Activated CD4-positive, alpha-beta T cell treated with anti-CD3 and anti-CD28 coated beads for 36 hours (primary cell): ENCODE measurements at regions of chr18 and their contacts with region 1.

Region 1: DNA sequence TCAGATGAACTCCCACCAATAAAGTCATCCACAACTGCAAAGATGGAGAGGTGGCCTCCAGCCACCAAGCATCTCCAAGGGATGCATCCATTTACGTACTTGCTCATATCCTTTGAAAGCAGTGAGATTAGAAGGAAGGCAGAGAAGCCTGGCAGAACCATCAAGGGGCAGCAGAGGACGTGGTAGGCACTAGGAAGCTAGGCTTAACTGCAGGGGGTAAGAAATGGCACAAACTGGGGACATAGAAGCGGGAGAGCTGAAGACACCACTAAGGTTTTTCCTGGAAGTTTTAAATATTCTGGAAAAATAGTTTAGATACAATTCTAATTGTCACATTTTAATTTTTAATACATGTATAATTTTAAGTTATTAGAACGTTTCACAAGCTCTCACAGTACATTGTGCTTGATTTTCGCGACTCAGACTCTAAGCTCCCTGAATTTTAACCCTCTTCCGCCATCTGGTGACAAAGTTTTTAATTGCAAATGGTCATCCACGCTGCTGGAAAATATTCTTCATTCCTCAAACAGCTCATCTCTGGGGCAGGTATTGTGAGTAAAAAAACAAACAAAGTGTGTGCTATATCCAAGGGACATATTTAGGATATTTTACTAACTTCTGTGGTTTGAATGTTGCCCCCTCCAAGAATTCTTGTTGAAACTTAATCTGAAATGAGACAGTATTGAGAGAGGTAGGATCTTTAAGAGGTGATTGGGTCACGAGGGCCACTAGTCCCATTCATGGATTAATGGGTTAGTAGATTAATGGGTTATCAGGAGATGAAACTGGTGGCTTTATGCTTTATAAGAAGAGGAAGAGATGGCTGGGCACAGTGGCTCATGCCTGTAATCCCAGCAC is 1.6 kb upstream of the PSTPIP2 start:
- DNase-seq: peak; percentile 68
- ATAC-seq: peak; percentile 60
- H3K4me3 Mint-ChIP-seq: no peak overlapping the region
- H3K27ac Mint-ChIP-seq: no peak overlapping the region
- H3K4me1 Mint-ChIP-seq: peaks cover 36% of the 10 kb centered on the region
- H3K27me3 Mint-ChIP-seq: no peaks in the 10 kb centered on the region

Region 2: DNA sequence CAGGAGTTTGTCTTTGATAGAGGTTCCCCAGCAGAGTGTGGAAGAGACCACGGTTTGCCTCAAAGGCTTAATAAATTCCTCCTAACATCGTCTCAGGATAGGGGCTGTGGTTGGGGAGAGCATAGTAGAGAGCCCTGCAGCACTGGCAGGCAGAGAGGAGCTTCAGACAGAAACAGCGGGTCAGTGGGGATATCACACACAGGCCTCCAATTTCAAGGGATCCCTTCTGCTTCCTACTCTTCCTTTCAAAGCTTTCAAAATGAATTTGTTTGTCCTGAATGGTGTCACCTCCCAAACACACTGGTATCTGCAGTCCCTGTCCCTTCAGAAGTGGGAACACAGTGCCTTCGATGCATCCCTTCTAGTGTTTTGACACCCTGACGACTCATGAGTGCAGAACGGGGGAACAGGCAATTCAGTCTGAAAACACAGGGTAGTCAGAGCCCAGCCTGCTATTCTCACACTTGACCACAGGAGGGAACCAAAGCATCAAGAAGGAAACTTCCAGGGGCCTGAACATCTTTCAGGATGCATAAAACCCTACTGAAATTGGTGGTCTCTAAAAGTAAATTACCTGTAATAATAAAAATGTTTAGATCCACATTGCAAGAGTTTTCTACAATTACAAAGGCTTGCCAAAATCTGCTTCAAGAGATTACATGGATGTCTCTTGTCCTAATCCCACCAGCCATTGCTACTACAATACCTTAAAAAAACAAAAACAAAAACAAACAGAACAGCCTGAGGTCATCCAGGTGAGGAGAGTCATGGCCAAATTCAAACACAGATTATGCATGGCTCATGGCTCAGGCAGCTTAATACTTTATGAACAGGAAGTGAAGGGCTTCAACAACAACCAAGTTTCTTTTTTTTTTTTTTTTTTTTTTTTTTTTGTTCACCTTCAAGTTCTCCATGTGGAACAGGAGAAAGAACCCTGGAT is 408.6 kb before region 1 on chr18:
- CTCF ChIA-PET with region 1: interaction called, 42 read pairs
- POLR2A ChIA-PET with region 1: interaction called, 5 read pairs
- intact Hi-C with region 1: loop called (anchors 1 kb)
- DNase-seq: peak; percentile 76
- ATAC-seq: peak; percentile 60
- H3K4me3 Mint-ChIP-seq: no peak overlapping the region
- H3K27ac Mint-ChIP-seq: peak overlapping the region; percentile 53
- H3K4me1 Mint-ChIP-seq: peaks cover 52% of the 10 kb centered on the region
- H3K27me3 Mint-ChIP-seq: no peaks in the 10 kb centered on the region

Region 3: GRCh38 chr18:45874491-45875184 is 199.1 kb before region 1 on chr18:
- CTCF ChIA-PET with region 1: interaction called, 20 read pairs
- POLR2A ChIA-PET with region 1: no interaction called
- intact Hi-C with region 1: loop called in 1 of 2 experiments (anchors 2 kb)
- DNase-seq: peak; percentile 84
- ATAC-seq: peak; percentile 91
- H3K4me3 Mint-ChIP-seq: peak overlapping the region; percentile 41
- H3K27ac Mint-ChIP-seq: peak overlapping the region; percentile 96
- H3K4me1 Mint-ChIP-seq: peaks cover 34% of the 10 kb centered on the region
- H3K27me3 Mint-ChIP-seq: no peaks in the 10 kb centered on the region

Region 4: GRCh38 chr18:45916302-45916701 is 157.4 kb before region 1 on chr18:
- CTCF ChIA-PET with region 1: interaction called, 13 read pairs
- POLR2A ChIA-PET with region 1: interaction called, 3 read pairs
- intact Hi-C with region 1: loop called in 1 of 2 experiments (anchors 1 kb)
- DNase-seq: peak; percentile 34
- ATAC-seq: peak; percentile 55
- H3K4me3 Mint-ChIP-seq: no peak overlapping the region
- H3K27ac Mint-ChIP-seq: no peak overlapping the region
- H3K4me1 Mint-ChIP-seq: peaks cover 12% of the 10 kb centered on the region
- H3K27me3 Mint-ChIP-seq: no peaks in the 10 kb centered on the region

Region 5: DNA sequence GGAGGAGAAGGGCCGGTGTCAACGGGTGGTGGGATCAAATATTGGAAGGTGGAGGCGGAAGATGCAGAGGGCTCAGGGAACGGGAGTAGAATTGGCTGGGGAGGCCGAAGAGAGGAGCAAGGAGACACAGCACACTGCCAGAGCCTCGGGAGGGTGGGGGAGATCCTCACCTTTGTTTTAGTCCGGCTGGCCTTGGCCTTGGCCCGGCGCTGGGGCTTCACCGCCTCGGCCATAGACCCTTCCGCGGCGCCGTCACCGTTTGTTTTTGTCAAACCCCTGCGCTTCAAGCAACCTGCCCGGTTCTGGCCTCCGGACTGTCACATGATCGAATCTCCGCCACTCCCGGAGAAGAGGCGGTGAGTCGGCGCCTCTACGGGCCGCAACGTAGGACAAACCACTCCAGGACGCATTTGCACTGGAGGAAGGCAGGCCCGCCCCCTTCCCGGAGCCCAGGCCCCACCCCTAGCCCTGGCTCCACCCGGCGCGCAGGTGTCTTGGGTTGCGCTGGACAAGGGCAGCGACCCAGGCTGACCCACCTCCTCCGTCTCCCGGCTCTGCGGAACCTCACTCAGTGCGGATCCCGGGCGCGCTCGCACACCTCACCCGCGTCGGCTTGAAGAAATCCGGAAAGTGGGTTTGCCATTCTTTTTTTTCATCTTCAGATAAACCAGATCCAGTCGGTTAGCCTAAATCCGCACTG is 106.5 kb before region 1 on chr18 and contains the start of gene EPG5:
- CTCF ChIA-PET with region 1: interaction called, 7 read pairs
- POLR2A ChIA-PET with region 1: no interaction called
- intact Hi-C with region 1: loop called in 1 of 2 experiments (anchors 1 kb)
- DNase-seq: peak; percentile 97
- ATAC-seq: peak; percentile 96
- H3K4me3 Mint-ChIP-seq: peak within 1 kb of the TSS; percentile 94
- H3K27ac Mint-ChIP-seq: peak within 1 kb of the TSS; percentile 94
- H3K4me1 Mint-ChIP-seq: peaks cover 35% of the 10 kb centered on the region
- H3K27me3 Mint-ChIP-seq: no peaks in the 10 kb centered on the region
- total RNA-seq, gene EPG5: 13.6 to 14.5 TPM

Region 6: GRCh38 chr18:46028536-46028891 is 45.2 kb before region 1 on chr18:
- CTCF ChIA-PET with region 1: interaction called, 4 read pairs
- POLR2A ChIA-PET with region 1: no interaction called
- intact Hi-C with region 1: loop called in 1 of 2 experiments (anchors 5 kb)
- DNase-seq: no peak
- ATAC-seq: no peak
- H3K4me3 Mint-ChIP-seq: peak overlapping the region; percentile 71
- H3K27ac Mint-ChIP-seq: peak overlapping the region; percentile 89
- H3K4me1 Mint-ChIP-seq: peaks cover 12% of the 10 kb centered on the region
- H3K27me3 Mint-ChIP-seq: peaks cover 9% of the 10 kb centered on the region

Region 7: DNA sequence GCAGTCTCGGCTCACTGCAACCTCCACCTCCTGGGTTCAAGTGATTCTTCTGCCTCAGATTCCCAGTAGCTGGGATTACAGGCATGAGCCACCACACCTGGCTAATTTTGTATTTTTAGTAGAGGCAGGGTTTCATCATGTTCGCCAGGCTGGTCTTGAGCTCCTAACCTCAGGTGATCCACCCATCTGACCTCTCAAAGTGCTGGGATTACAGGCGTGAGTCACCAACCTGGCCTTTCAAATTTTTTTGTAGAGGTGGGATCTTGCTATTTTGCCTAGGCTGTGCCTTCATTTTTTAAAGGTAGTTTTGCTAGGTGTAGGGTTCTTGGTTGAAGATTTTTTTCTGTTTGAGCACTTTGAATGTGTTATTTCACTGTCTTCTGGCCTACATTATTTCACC is 36.7 kb after region 1 on chr18:
- CTCF ChIA-PET with region 1: no interaction called
- POLR2A ChIA-PET with region 1: no interaction called
- intact Hi-C with region 1: no loop called
- DNase-seq: no peak
- ATAC-seq: no peak
- H3K4me3 Mint-ChIP-seq: no peak overlapping the region
- H3K27ac Mint-ChIP-seq: no peak overlapping the region
- H3K4me1 Mint-ChIP-seq: peaks cover 25% of the 10 kb centered on the region
- H3K27me3 Mint-ChIP-seq: no peaks in the 10 kb centered on the region